CD4-positive, alpha-beta memory T cell (primary cell): ENCODE measurements at regions of chr6 and their contacts with region 1.

Region 1: GRCh38 chr6:27146706-27147505 is 100.6 kb upstream of the PRSS16 start:
- DNase-seq: peak; percentile 85 to 96 (median 94)
- H3K4me3 ChIP-seq: peak overlapping the region; percentile 76 to 77
- H3K4me3 Mint-ChIP-seq: no peak overlapping the region
- H3K27ac ChIP-seq: peak overlapping the region; percentile 97
- H3K27ac Mint-ChIP-seq: no peak overlapping the region
- H3K4me1 ChIP-seq: peaks cover 22% of the 10 kb centered on the region
- H3K4me1 Mint-ChIP-seq: peaks cover 10 to 20% (median 13%) of the 10 kb centered on the region in 4 donors
- H3K27me3 ChIP-seq: no peaks in the 10 kb centered on the region
- H3K27me3 Mint-ChIP-seq: no peaks in the 10 kb centered on the region

Region 2: GRCh38 chr6:26175428-26176181 is 971.3 kb before region 1 on chr6:
- CTCF ChIA-PET with region 1: interaction called, 3 read pairs
- POLR2A ChIA-PET with region 1: interaction called, 17 read pairs
- intact Hi-C with region 1: no loop called
- DNase-seq: peak; percentile 50 to 73 (median 70)
- H3K4me3 ChIP-seq: no peak overlapping the region
- H3K4me3 Mint-ChIP-seq: peak overlapping the region in 4 of 8 donors; percentile 37 to 70 (median 65)
- H3K27ac ChIP-seq: no peak overlapping the region
- H3K27ac Mint-ChIP-seq: peak overlapping the region; percentile 28 to 89 (median 78)
- H3K4me1 ChIP-seq: peaks cover 37% of the 10 kb centered on the region
- H3K4me1 Mint-ChIP-seq: peaks cover 21 to 40% (median 27%) of the 10 kb centered on the region in 4 donors
- H3K27me3 ChIP-seq: no peaks in the 10 kb centered on the region
- H3K27me3 Mint-ChIP-seq: no peaks in the 10 kb centered on the region

Region 3: GRCh38 chr6:26249957-26250697 is 896.8 kb before region 1 on chr6:
- CTCF ChIA-PET with region 1: no interaction called
- POLR2A ChIA-PET with region 1: interaction called, 14 read pairs
- intact Hi-C with region 1: no loop called
- DNase-seq: peak; percentile 79 to 88 (median 83)
- H3K4me3 ChIP-seq: peak overlapping the region; percentile 86 to 88
- H3K4me3 Mint-ChIP-seq: peak overlapping the region; percentile 92 to 99 (median 98)
- H3K27ac ChIP-seq: peak overlapping the region; percentile 59
- H3K27ac Mint-ChIP-seq: peak overlapping the region; percentile 85 to 97 (median 94)
- H3K4me1 ChIP-seq: peaks cover 25% of the 10 kb centered on the region
- H3K4me1 Mint-ChIP-seq: peaks cover 28 to 53% (median 40%) of the 10 kb centered on the region in 4 donors
- H3K27me3 ChIP-seq: no peaks in the 10 kb centered on the region
- H3K27me3 Mint-ChIP-seq: no peaks in the 10 kb centered on the region

Region 4: DNA sequence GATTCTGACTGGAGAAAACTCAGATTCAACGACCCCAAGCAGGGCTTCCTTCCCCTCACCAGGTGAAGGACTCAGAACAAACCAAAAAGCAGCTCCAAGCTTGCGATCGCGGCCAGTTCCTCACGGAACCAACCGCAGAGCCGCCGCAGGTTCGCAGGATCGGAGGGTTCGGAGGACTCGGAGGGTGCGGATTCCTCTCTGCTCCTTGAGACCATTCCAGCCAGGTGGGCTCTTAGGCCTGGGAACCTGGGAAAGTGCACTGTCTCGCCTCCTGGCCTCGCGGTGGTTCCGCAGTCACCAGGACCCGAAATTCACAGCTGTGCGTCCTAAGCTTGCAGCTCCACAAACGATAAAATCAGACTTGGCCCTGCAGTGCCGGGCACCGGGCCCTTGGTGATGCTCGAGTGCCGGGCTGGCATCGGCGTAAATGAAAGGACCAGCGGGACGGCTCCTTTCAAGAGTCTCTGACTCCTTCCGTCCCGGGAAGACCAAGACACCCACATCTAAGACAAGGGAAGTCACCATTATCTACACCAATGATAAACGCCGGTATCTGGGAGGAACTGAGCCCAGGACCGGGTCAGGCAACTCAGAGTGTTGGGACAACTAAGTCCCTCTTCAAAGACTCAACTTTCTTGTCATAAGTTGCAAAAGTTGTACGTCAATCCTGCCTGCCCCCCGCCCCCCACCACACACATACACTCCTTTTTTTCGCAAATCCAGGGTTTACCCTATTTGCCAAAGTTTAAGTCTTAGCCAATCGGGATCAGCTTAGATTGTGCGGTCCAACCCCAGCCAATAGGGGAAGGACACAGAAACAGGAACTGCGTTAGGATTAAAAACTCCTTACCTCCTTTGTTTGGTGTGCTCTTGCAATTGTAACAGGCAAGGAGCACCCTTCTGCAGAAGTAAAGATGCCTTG is 30.8 kb after region 1 on chr6:
- CTCF ChIA-PET with region 1: interaction called, 7 read pairs
- POLR2A ChIA-PET with region 1: interaction called, 43 read pairs
- intact Hi-C with region 1: no loop called
- DNase-seq: peak; percentile 68 to 80 (median 70)
- H3K4me3 ChIP-seq: peak overlapping the region; percentile 98
- H3K4me3 Mint-ChIP-seq: peak overlapping the region; percentile 95 to 99 (median 98)
- H3K27ac ChIP-seq: peak overlapping the region; percentile 77
- H3K27ac Mint-ChIP-seq: peak overlapping the region; percentile 86 to 100 (median 93)
- H3K4me1 ChIP-seq: peaks cover 7% of the 10 kb centered on the region
- H3K4me1 Mint-ChIP-seq: peaks cover 5 to 29% (median 13%) of the 10 kb centered on the region in 4 donors
- H3K27me3 ChIP-seq: no peaks in the 10 kb centered on the region
- H3K27me3 Mint-ChIP-seq: peaks cover 3 to 4% of the 10 kb centered on the region in 2 donors

Region 5: GRCh38 chr6:27825025-27825793 is 678.3 kb after region 1 on chr6:
- CTCF ChIA-PET with region 1: no interaction called
- POLR2A ChIA-PET with region 1: interaction called, 22 read pairs
- intact Hi-C with region 1: no loop called
- DNase-seq: no peak
- H3K4me3 ChIP-seq: peak overlapping the region; percentile 62 to 79
- H3K4me3 Mint-ChIP-seq: peak overlapping the region; percentile 88 to 98 (median 92)
- H3K27ac ChIP-seq: peak overlapping the region; percentile 66
- H3K27ac Mint-ChIP-seq: peak overlapping the region; percentile 91 to 100 (median 98)
- H3K4me1 ChIP-seq: peaks cover 29% of the 10 kb centered on the region
- H3K4me1 Mint-ChIP-seq: peaks cover 16 to 43% (median 31%) of the 10 kb centered on the region in 4 donors
- H3K27me3 ChIP-seq: no peaks in the 10 kb centered on the region
- H3K27me3 Mint-ChIP-seq: no peaks in the 10 kb centered on the region

Region 6: GRCh38 chr6:28880894-28881780 is 1734.2 kb after region 1 on chr6:
- CTCF ChIA-PET with region 1: no interaction called
- POLR2A ChIA-PET with region 1: interaction called, 7 read pairs
- intact Hi-C with region 1: loop called (anchors 5 kb)
- DNase-seq: peak in 4 of 5 donors; percentile 21 to 46 (median 37)
- H3K4me3 ChIP-seq: no peak overlapping the region
- H3K4me3 Mint-ChIP-seq: peak overlapping the region; percentile 62 to 83 (median 76)
- H3K27ac ChIP-seq: no peak overlapping the region
- H3K27ac Mint-ChIP-seq: peak overlapping the region in 6 of 7 donors; percentile 18 to 94 (median 78)
- H3K4me1 ChIP-seq: peaks cover 24% of the 10 kb centered on the region
- H3K4me1 Mint-ChIP-seq: peaks cover 30 to 39% (median 35%) of the 10 kb centered on the region in 4 donors
- H3K27me3 ChIP-seq: no peaks in the 10 kb centered on the region
- H3K27me3 Mint-ChIP-seq: peaks cover 12 to 23% of the 10 kb centered on the region in 2 donors